ENCODE measurements at regions of chr17 and their contacts with region 1.

Region 1: DNA sequence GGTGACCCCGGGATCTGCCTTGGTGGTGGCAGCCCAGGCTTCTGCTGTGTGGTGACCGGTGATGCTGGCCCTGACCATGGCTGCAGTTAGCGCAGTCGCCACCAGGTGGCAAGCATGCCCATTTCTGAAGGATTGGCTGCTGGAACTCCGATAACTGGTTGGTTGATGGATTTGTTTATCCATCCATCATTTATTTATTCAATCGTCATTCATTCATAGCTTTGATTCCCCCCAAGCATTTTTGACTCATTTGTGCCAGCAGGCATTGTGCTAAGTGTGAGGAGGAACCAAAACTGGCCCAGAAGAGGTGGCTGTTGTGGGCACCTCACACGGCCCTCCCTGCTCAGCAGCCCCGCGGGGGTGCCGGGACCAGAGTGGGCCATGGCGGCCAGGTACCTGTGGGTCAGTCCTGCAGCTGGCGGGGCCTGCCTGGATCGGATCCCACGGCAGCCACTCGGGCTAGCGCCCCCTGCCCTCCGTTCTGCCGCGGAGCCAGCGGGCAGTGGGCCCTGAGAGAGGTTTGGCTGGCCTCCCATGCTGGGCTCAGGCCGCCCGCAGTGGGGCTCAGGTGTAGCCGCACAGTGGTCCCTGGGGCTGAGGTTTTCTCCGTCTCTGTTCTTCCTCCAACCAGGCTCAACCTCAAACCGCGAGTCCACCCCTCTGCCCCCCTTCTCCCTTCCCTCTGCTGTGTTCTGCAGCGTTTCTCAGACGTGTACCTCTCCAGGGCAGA is 28.8 kb upstream of the ITGA3 start:
- DNase-seq: peak; percentile 93
- H3K4me3 ChIP-seq: peak overlapping the region; percentile 46 to 71
- H3K27ac ChIP-seq: peak overlapping the region; percentile 74 to 99; a peak in 3 of 4 replicates
- H3K4me1 ChIP-seq: peaks cover 16 to 21% of the 10 kb centered on the region in 2 experiments; a peak in 3 of 4 replicates
- H3K27me3 ChIP-seq: no peaks in the 10 kb centered on the region
- CTCF ChIP-seq: peak; percentile 100
- EP300 ChIP-seq: no peak; a peak in 1 of 4 replicates
- RAD21 ChIP-seq: peak; percentile 95

Region 2: GRCh38 chr17:49755663-49756283 is 271.3 kb before region 1 on chr17:
- CTCF ChIA-PET with region 1: no interaction called
- POLR2A ChIA-PET with region 1: no interaction called
- DNase-seq: no peak
- H3K4me3 ChIP-seq: no peak overlapping the region
- H3K27ac ChIP-seq: no peak overlapping the region
- H3K4me1 ChIP-seq: peaks cover 0 to 5% of the 10 kb centered on the region in 2 experiments; a peak in 1 of 4 replicates
- H3K27me3 ChIP-seq: no peaks in the 10 kb centered on the region
- CTCF ChIP-seq: no peak
- EP300 ChIP-seq: no peak
- RAD21 ChIP-seq: no peak

Region 3: DNA sequence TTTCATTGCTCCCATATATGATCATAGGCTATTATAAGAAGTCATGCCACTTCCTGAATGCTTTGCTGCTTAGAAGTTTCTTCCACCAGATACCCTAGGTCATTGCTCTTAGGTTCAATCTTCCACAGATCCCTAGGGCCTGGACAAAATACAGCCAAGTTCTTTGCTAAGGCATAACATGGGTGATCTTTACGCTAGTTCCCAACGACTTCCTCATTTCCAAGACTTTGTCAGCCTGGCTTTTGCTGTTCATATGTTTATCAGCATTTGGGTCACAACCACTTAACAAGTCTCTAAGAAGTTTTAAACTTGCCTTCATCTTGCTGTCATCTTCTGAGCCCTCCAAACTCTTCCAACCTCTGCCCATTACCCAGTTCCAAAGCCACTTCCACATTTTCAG is 11.9 kb before region 1 on chr17:
- CTCF ChIA-PET with region 1: interaction called, 11 read pairs
- POLR2A ChIA-PET with region 1: no interaction called
- DNase-seq: no peak
- H3K4me3 ChIP-seq: no peak overlapping the region
- H3K27ac ChIP-seq: no peak overlapping the region
- H3K4me1 ChIP-seq: no peaks in the 10 kb centered on the region
- H3K27me3 ChIP-seq: no peaks in the 10 kb centered on the region
- CTCF ChIP-seq: no peak
- EP300 ChIP-seq: no peak
- RAD21 ChIP-seq: no peak

Region 4: DNA sequence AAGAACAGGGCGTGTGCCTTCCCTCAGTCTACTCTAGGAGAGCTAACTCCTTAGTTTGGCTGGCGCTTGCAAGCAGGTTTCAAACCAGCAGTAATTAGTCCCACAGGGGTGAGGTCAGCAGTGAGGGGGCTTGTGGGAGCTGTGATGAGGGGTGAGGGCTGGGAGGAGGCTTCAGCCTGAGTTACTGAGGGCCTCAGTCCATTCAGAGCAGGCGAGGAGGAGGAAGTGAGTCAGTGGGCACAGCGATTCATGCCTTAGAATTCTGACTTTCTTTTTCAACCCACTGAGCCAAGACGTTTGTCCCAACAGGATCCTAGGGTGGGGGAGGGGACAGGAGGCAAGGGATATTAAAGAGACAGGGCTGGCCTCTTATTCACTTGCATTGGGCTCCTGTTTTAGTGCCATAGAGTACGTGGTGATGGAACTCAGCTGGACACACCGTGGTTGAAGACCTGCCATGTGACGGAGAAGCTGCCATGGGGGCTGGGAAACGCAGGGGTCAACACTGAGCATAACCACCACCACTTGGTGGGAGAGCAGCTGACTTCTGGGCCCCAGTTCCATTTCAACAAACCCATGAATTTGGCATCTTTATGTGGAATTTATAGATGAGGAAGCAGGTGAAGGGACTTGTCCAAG is 20.5 kb after region 1 on chr17:
- CTCF ChIA-PET with region 1: interaction called, 126 read pairs
- POLR2A ChIA-PET with region 1: no interaction called
- DNase-seq: no peak
- H3K4me3 ChIP-seq: no peak overlapping the region
- H3K27ac ChIP-seq: peak overlapping the region; percentile 40 to 100; a peak in 3 of 4 replicates
- H3K4me1 ChIP-seq: peaks cover 25 to 64% of the 10 kb centered on the region in 2 experiments
- H3K27me3 ChIP-seq: no peaks in the 10 kb centered on the region
- CTCF ChIP-seq: no peak
- EP300 ChIP-seq: peak in 1 of 2 experiments; percentile 76; a peak in 1 of 4 replicates
- RAD21 ChIP-seq: no peak

Region 5: GRCh38 chr17:50064258-50065001 is 37.4 kb after region 1 on chr17:
- CTCF ChIA-PET with region 1: interaction called, 17 read pairs
- POLR2A ChIA-PET with region 1: no interaction called
- DNase-seq: peak; percentile 64
- H3K4me3 ChIP-seq: no peak overlapping the region
- H3K27ac ChIP-seq: peak overlapping the region; percentile 77 to 100
- H3K4me1 ChIP-seq: peaks cover 44 to 64% of the 10 kb centered on the region in 2 experiments
- H3K27me3 ChIP-seq: no peaks in the 10 kb centered on the region
- CTCF ChIP-seq: no peak
- EP300 ChIP-seq: peak in 1 of 2 experiments; percentile 89; a peak in 2 of 4 replicates
- RAD21 ChIP-seq: no peak